B cell (primary cell): ENCODE measurements at regions of chr20 and their contacts with region 1.

Region 1: GRCh38 chr20:57432874-57433491 is 41.8 kb downstream of the RBM38 start:
- DNase-seq: peak; percentile 83
- ATAC-seq: peak; percentile 72
- H3K4me3 ChIP-seq: peak overlapping the region in 4 of 5 experiments; percentile 7 to 25 (median 18)
- H3K4me3 Mint-ChIP-seq: peak overlapping the region; percentile 56
- H3K27ac ChIP-seq: peak overlapping the region; percentile 87 to 93
- H3K27ac Mint-ChIP-seq: peak overlapping the region; percentile 89
- H3K4me1 ChIP-seq: peaks cover 76 to 85% of the 10 kb centered on the region in 2 donors
- H3K4me1 Mint-ChIP-seq: peaks cover 81% of the 10 kb centered on the region
- H3K27me3 ChIP-seq: no peaks in the 10 kb centered on the region
- H3K27me3 Mint-ChIP-seq: no peaks in the 10 kb centered on the region
- CTCF ChIP-seq: no peak

Region 2: GRCh38 chr20:56995576-56996075 is 437.4 kb before region 1 on chr20:
- CTCF ChIA-PET with region 1: no interaction called
- POLR2A ChIA-PET with region 1: no interaction called
- intact Hi-C with region 1: no loop called
- DNase-seq: no peak
- ATAC-seq: no peak
- H3K4me3 ChIP-seq: no peak overlapping the region
- H3K4me3 Mint-ChIP-seq: no peak overlapping the region
- H3K27ac ChIP-seq: no peak overlapping the region
- H3K27ac Mint-ChIP-seq: no peak overlapping the region
- H3K4me1 ChIP-seq: no peaks in the 10 kb centered on the region
- H3K4me1 Mint-ChIP-seq: no peaks in the 10 kb centered on the region
- H3K27me3 ChIP-seq: peaks cover 0 to 4% (median 0%) of the 10 kb centered on the region in 4 experiments
- H3K27me3 Mint-ChIP-seq: peaks cover 7% of the 10 kb centered on the region
- CTCF ChIP-seq: peak; percentile 5

Region 3: DNA sequence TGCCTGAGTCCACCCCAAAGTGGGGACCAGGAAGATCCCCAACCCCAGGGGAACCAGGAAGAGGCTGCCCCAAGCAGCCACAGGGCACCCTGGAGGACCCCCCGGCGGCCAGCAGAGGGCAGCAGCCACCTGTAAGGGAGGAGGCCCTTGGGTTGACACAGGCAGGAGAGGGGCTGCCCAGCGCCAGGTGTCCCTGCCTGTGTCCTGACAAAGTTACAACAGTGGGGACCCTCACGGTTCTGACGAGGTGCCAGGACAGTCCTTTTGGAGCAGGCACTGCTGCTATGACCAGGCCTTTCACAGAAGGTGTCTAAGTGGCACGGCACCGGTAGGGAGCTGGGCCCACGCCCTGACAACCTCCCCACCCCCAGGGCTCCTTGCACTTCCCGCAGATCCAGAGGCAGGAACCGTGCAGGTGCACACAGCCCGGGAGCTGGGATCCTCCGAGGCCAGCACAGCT is 343.3 kb before region 1 on chr20:
- CTCF ChIA-PET with region 1: no interaction called
- POLR2A ChIA-PET with region 1: no interaction called
- intact Hi-C with region 1: no loop called
- DNase-seq: peak; percentile 44
- ATAC-seq: peak; percentile 47
- H3K4me3 ChIP-seq: no peak overlapping the region
- H3K4me3 Mint-ChIP-seq: no peak overlapping the region
- H3K27ac ChIP-seq: no peak overlapping the region
- H3K27ac Mint-ChIP-seq: no peak overlapping the region
- H3K4me1 ChIP-seq: peaks cover 0 to 6% of the 10 kb centered on the region in 2 donors
- H3K4me1 Mint-ChIP-seq: peaks cover 10% of the 10 kb centered on the region
- H3K27me3 ChIP-seq: peaks cover 0 to 7% (median 0%) of the 10 kb centered on the region in 4 experiments
- H3K27me3 Mint-ChIP-seq: peaks cover 13% of the 10 kb centered on the region
- CTCF ChIP-seq: peak; percentile 70

Region 4: GRCh38 chr20:57383447-57384347 is 49.3 kb before region 1 on chr20:
- CTCF ChIA-PET with region 1: interaction called, 36 read pairs
- POLR2A ChIA-PET with region 1: interaction called, 7 read pairs
- intact Hi-C with region 1: loop called (anchors 10 kb)
- DNase-seq: no peak
- ATAC-seq: no peak
- H3K4me3 ChIP-seq: no peak overlapping the region
- H3K4me3 Mint-ChIP-seq: no peak overlapping the region
- H3K27ac ChIP-seq: no peak overlapping the region
- H3K27ac Mint-ChIP-seq: peak overlapping the region; percentile 10
- H3K4me1 ChIP-seq: peaks cover 2 to 8% of the 10 kb centered on the region in 2 donors
- H3K4me1 Mint-ChIP-seq: peaks cover 13% of the 10 kb centered on the region
- H3K27me3 ChIP-seq: no peaks in the 10 kb centered on the region
- H3K27me3 Mint-ChIP-seq: no peaks in the 10 kb centered on the region
- CTCF ChIP-seq: no peak

Region 5: GRCh38 chr20:57412347-57413029 is 20.5 kb before region 1 on chr20:
- CTCF ChIA-PET with region 1: interaction called, 4 read pairs
- POLR2A ChIA-PET with region 1: interaction called, 10 read pairs
- intact Hi-C with region 1: no loop called
- DNase-seq: no peak
- ATAC-seq: peak; percentile 22
- H3K4me3 ChIP-seq: no peak overlapping the region
- H3K4me3 Mint-ChIP-seq: no peak overlapping the region
- H3K27ac ChIP-seq: no peak overlapping the region
- H3K27ac Mint-ChIP-seq: peak overlapping the region; percentile 5
- H3K4me1 ChIP-seq: peaks cover 0 to 8% of the 10 kb centered on the region in 2 donors
- H3K4me1 Mint-ChIP-seq: peaks cover 37% of the 10 kb centered on the region
- H3K27me3 ChIP-seq: no peaks in the 10 kb centered on the region
- H3K27me3 Mint-ChIP-seq: no peaks in the 10 kb centered on the region
- CTCF ChIP-seq: no peak

Region 6: DNA sequence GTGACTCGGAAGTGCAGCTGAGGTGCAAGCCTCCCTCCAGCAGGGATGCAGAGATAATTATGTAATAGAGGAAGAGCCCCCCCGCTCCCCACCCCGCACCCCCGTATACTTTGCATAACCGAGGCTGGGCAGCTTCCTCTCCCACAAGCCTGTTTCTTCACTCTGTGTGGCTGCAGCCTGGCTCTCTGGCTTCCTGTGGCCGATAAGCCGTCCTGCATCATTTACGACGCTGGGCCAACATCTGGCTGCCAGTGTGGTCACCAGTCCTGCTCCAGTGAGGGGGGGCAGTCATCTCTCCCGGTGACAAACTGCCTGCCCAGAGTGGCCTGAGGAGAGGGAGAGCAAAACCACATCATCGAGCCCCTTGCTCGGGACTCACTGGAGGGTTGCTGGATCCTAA is 17.4 kb after region 1 on chr20:
- CTCF ChIA-PET with region 1: interaction called, 5 read pairs
- POLR2A ChIA-PET with region 1: interaction called, 5 read pairs
- intact Hi-C with region 1: loop called (anchors 1 kb)
- DNase-seq: peak; percentile 78
- ATAC-seq: peak; percentile 82
- H3K4me3 ChIP-seq: peak overlapping the region; percentile 15 to 48 (median 36)
- H3K4me3 Mint-ChIP-seq: peak overlapping the region; percentile 86
- H3K27ac ChIP-seq: peak overlapping the region; percentile 50
- H3K27ac Mint-ChIP-seq: peak overlapping the region; percentile 73
- H3K4me1 ChIP-seq: peaks cover 38 to 56% of the 10 kb centered on the region in 2 donors
- H3K4me1 Mint-ChIP-seq: peaks cover 63% of the 10 kb centered on the region
- H3K27me3 ChIP-seq: no peaks in the 10 kb centered on the region
- H3K27me3 Mint-ChIP-seq: no peaks in the 10 kb centered on the region
- CTCF ChIP-seq: no peak